RWPE1 (cell line): ENCODE measurements at regions of chr3 and their contacts with region 1.

Region 1: GRCh38 chr3:182618085-182618732 is 175.1 kb upstream of the ATP11B start:
- DNase-seq: no peak
- H3K27ac ChIP-seq: no peak overlapping the region
- CTCF ChIP-seq: peak; percentile 73

Region 2: GRCh38 chr3:181709537-181710279 is 908.5 kb before region 1 on chr3:
- CTCF ChIA-PET with region 1: interaction called, 10 read pairs
- POLR2A ChIA-PET with region 1: no interaction called
- DNase-seq: peak; percentile 42
- H3K27ac ChIP-seq: no peak overlapping the region
- CTCF ChIP-seq: peak; percentile 88

Region 3: DNA sequence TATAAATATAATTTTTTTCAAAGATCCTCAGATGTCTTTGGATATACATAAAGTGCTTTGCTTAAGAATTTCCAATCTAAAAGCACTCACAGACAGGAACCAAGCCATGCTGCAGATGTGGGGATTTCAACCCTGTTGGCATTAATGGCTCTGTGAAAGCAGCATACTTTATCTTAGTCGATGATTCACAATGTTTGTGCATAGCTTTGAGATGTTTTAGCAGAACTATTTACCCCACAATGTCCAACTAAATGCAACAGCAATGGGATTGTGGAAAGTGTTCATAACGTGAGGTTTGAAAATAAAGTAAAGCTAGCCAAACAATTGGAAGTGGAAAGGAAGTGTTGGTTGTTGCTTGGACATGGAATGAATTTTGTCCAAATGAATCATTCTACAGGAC is 535.1 kb before region 1 on chr3:
- CTCF ChIA-PET with region 1: no interaction called
- POLR2A ChIA-PET with region 1: no interaction called
- DNase-seq: no peak
- H3K27ac ChIP-seq: no peak overlapping the region
- CTCF ChIP-seq: no peak

Region 4: DNA sequence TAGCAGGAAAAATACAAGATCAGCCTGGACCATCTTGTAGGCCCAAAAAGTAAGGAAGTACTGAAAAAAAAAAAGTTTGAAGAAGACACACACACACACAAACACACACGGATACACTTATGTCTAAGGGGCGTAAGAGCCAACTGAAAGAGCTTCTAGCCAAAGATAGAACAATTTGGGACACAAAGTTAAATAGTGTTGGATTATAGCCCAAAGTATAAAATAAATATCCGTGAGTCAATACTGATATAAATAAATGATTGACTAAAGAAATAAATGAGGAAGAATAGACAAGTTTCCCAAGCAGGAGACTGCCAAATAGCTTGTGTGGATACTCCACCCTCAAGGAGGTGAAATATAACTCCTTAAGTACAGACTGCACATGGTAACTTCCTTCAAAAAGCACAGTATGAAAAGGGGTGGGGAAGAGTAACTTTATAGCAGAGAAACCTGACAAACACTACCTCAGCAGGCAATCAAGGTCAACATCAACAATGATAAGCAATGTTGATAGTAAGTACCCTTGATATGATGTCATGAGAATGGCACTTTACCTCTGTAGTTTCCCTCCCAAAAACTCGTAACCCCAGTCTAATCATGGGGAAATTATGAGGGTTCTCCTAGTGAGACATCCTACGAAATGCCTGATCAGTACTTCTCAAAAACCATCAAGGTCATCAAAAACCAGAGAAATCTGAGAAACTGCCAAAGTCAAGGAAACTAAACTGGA is 12.2 kb before region 1 on chr3:
- CTCF ChIA-PET with region 1: no interaction called
- POLR2A ChIA-PET with region 1: no interaction called
- DNase-seq: no peak
- H3K27ac ChIP-seq: no peak overlapping the region
- CTCF ChIP-seq: no peak

Region 5: GRCh38 chr3:182683453-182683852 is 65.2 kb after region 1 on chr3:
- CTCF ChIA-PET with region 1: interaction called, 10 read pairs
- POLR2A ChIA-PET with region 1: no interaction called
- DNase-seq: peak; percentile 73
- H3K27ac ChIP-seq: no peak overlapping the region
- CTCF ChIP-seq: peak; percentile 96

Region 6: GRCh38 chr3:182740710-182741109 is 122.5 kb after region 1 on chr3:
- CTCF ChIA-PET with region 1: no interaction called
- POLR2A ChIA-PET with region 1: no interaction called
- DNase-seq: peak; percentile 64
- H3K27ac ChIP-seq: no peak overlapping the region
- CTCF ChIP-seq: no peak